ENCODE measurements at regions of chr2 and their contacts with region 1.

Region 1: GRCh38 chr2:134118279-134119116 is 135.4 kb upstream of the MGAT5 start:
- DNase-seq: peak; percentile 87 to 92 (median 87)
- ATAC-seq: peak; percentile 67 to 69
- H3K4me3 ChIP-seq: no peak overlapping the region
- H3K27ac ChIP-seq: peak overlapping the region; percentile 7
- H3K4me1 ChIP-seq: peaks cover 10% of the 10 kb centered on the region
- H3K27me3 ChIP-seq: no peaks in the 10 kb centered on the region

Region 2: DNA sequence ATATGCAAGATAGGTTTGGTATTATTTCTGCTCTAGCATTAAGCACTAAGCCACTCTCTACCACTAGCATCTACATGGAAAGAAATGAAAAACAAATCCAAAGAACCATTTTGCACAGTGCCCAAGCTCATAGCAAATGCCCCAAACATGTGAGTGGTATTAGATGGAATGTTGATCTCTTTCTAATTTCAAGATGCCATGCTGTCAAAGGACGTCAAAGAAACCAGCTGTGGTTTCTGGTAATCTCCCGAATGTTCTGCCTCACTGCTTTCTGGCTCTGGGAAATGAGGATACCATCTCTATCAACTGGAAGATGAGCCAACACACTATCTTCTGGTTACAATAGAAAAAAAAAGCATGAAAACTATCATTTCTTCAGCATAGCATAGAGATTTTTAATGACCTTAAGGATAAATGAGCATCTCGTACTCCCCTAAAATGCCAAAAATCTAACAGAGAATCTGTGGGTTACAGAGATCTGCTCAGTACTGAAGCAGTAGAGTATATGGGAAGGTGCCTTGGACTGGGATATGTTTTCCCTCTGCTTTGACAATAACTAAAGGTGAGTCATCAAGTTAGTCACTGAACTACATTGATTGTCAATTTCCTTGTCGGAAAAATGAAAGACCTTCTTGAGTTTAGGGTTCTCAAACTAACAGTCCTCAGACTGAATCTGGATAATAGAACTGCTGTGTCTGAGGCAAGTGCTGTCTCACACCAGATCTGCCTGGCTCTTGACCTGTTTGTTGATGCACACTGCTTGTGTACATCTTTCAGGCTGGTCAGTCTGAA is 305.5 kb before region 1 on chr2:
- intact Hi-C with region 1: no loop called
- DNase-seq: no peak
- ATAC-seq: no peak
- H3K4me3 ChIP-seq: no peak overlapping the region
- H3K27ac ChIP-seq: no peak overlapping the region
- H3K4me1 ChIP-seq: no peaks in the 10 kb centered on the region
- H3K27me3 ChIP-seq: no peaks in the 10 kb centered on the region

Region 3: GRCh38 chr2:133886735-133887660 is 231.5 kb before region 1 on chr2:
- intact Hi-C with region 1: loop called in 3 of 4 experiments (anchors 5 to 10 kb)
- DNase-seq: peak; percentile 66 to 90 (median 78)
- ATAC-seq: peak; percentile 71 to 72
- H3K4me3 ChIP-seq: no peak overlapping the region
- H3K27ac ChIP-seq: no peak overlapping the region
- H3K4me1 ChIP-seq: no peaks in the 10 kb centered on the region
- H3K27me3 ChIP-seq: no peaks in the 10 kb centered on the region

Region 4: GRCh38 chr2:134167019-134167600 is 48.6 kb after region 1 on chr2:
- intact Hi-C with region 1: no loop called
- DNase-seq: no peak
- ATAC-seq: no peak
- H3K4me3 ChIP-seq: no peak overlapping the region
- H3K27ac ChIP-seq: no peak overlapping the region
- H3K4me1 ChIP-seq: peaks cover 2% of the 10 kb centered on the region
- H3K27me3 ChIP-seq: no peaks in the 10 kb centered on the region

Region 5: DNA sequence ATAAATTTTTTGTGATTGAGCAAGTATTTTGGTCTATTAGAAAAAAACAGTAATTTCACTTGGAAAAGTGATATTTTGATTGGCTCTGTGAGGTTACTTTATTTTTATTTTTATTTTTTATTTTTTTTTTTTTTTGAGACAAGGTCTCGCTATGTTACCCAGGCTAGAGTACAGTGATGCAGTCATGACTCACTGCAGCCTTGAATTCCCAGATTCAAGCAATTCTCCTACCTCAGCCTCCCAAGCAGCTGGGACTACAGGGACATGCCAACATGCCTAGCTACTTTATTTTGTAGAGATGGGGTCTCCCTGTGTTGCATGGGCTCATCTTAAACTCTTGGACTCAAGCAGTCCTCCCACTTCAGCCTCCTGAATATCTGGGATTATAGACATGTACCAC is 74.5 kb after region 1 on chr2:
- intact Hi-C with region 1: loop called in 1 of 4 experiments (anchors 5 kb)
- DNase-seq: no peak
- ATAC-seq: peak in 1 of 2 donors; percentile 55
- H3K4me3 ChIP-seq: no peak overlapping the region
- H3K27ac ChIP-seq: no peak overlapping the region
- H3K4me1 ChIP-seq: peaks cover 10% of the 10 kb centered on the region
- H3K27me3 ChIP-seq: no peaks in the 10 kb centered on the region

Region 6: GRCh38 chr2:134232868-134233727 is 114.6 kb after region 1 on chr2:
- intact Hi-C with region 1: loop called in 1 of 4 experiments (anchors 10 kb)
- DNase-seq: no peak
- ATAC-seq: no peak
- H3K4me3 ChIP-seq: no peak overlapping the region
- H3K27ac ChIP-seq: no peak overlapping the region
- H3K4me1 ChIP-seq: peaks cover 18% of the 10 kb centered on the region
- H3K27me3 ChIP-seq: no peaks in the 10 kb centered on the region

Region 7: DNA sequence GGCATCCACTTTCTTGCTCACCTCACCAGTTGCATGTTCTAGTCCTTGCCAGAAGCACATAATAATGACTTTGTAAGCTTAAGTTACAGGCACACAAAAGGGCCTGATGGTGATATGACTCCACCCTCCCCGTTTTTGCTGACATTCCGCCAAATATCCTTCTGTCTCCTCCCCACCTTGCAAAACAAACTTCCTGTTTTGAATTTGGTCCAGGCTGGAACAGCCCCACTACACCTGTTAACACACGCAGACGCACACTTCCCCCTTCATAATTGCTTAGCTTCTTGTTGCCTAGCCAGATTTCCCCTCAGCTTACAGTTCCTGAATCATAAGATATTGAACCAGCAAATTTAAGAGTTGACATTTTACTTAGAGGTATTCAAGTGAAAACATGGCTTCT is 135.3 kb after region 1 on chr2 and contains the start of gene MGAT5:
- intact Hi-C with region 1: loop called (anchors 5 to 10 kb)
- DNase-seq: no peak
- ATAC-seq: no peak
- H3K4me3 ChIP-seq: no peak within 1 kb of the TSS
- H3K27ac ChIP-seq: peak within 1 kb of the TSS; percentile 25
- H3K4me1 ChIP-seq: peaks cover 27% of the 10 kb centered on the region
- H3K27me3 ChIP-seq: no peaks in the 10 kb centered on the region
- total RNA-seq, gene MGAT5: 112 to 156 (median 134) TPM

Region 8: GRCh38 chr2:134336352-134336751 is 217.9 kb after region 1 on chr2:
- intact Hi-C with region 1: no loop called
- DNase-seq: no peak
- ATAC-seq: no peak
- H3K4me3 ChIP-seq: no peak overlapping the region
- H3K27ac ChIP-seq: no peak overlapping the region
- H3K4me1 ChIP-seq: peaks cover 3% of the 10 kb centered on the region
- H3K27me3 ChIP-seq: no peaks in the 10 kb centered on the region

Region 9: DNA sequence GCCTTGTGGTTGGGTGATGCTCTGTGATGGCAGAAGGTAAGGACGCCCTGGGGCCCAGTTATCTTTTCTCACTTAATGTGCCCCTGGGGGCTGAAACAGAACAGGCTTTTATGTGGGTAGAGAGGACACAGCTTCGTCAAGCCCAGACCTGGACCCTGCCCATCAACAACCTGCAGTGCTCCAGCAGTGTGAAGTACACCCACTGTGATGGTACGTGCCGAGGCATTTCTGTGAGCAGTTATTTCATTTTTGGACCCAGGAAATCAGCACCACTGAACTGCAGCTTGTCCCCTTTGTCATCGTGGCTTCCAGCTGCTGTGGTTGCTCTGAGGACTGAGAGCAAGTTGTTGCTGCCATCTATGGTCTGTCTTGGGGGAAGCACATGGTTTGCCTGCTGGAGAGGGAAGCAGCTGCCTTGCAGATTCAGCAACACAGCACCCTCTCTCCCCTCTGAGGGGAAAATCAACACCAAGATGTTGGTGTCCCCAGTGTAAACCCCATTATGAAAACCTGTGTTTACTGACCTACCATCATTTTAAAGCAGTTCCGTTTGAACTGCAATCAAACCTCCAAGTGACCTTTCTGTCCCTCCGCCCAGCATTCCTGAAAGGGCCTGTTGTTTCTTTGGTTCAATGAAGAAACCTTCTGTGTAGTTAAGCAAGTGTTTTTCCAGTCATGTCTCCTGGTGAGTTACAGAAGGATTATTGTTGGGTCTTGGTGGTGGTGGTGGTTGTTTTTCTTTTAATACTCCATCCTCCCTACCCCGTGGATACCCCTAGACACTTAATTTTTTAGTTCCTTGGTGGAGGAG is 293.5 kb after region 1 on chr2:
- intact Hi-C with region 1: loop called in 3 of 4 experiments (anchors 5 to 10 kb)
- DNase-seq: peak; percentile 61 to 83 (median 79)
- ATAC-seq: peak; percentile 94 to 95
- H3K4me3 ChIP-seq: no peak overlapping the region
- H3K27ac ChIP-seq: peak overlapping the region; percentile 44
- H3K4me1 ChIP-seq: peaks cover 11% of the 10 kb centered on the region
- H3K27me3 ChIP-seq: no peaks in the 10 kb centered on the region